PC-9 (cell line): ENCODE measurements at regions of chr2 and their contacts with region 1.

Region 1: GRCh38 chr2:231642631-231643494 is 50.2 kb downstream of the TEX44 start:
- DNase-seq: peak; percentile 95 to 98
- H3K4me3 ChIP-seq: peak overlapping the region; percentile 48; the same call in 1 of the 2 replicates
- H3K27ac ChIP-seq: peak overlapping the region; percentile 98
- H3K4me1 ChIP-seq: peaks cover 64% of the 10 kb centered on the region
- H3K27me3 ChIP-seq: no peaks in the 10 kb centered on the region
- CTCF ChIP-seq: no peak

Region 2: DNA sequence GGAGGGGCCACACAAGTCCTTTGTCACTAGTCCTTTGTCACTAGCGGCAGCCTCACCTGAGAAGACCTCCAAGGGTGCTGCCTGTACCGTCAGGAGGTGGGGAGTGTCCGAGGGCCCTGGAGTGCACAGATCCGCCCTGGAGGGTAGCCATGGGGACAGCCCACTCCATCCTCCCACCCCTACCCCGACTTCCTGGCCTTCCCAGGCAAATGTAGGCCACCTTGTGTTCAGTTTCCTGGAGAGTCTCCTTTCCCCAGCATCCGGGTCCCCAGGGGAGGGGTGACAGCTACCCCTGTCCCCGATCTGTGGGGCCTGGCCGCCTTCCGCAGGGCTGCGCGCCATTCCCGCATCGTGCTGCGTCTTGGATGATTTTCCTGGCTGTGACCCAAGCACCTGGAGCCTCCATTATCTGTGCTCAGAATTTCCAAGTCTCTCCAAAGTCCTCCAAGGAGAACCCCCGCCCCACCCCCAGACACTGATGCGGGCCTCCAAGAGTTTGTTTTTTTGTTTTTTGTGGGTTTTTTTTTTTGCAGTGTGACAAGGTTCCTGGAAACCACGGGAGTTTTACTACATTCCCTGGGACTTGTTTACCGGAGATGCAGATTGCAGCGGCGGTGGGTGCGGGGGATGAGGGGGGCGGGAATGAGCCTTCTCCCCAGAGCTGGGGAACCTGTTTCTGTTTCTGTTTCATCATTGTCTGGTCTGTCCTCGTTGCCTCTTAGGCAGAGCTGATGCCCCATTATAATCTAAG is 21.6 kb before region 1 on chr2:
- CTCF ChIA-PET with region 1: no interaction called
- POLR2A ChIA-PET with region 1: interaction called, 7 read pairs
- intact Hi-C with region 1: loop called (anchors 1 kb)
- DNase-seq: peak; percentile 83 to 94
- H3K4me3 ChIP-seq: peak overlapping the region; percentile 55
- H3K27ac ChIP-seq: peak overlapping the region; percentile 80
- H3K4me1 ChIP-seq: peaks cover 57% of the 10 kb centered on the region
- H3K27me3 ChIP-seq: no peaks in the 10 kb centered on the region
- CTCF ChIP-seq: no peak

Region 3: DNA sequence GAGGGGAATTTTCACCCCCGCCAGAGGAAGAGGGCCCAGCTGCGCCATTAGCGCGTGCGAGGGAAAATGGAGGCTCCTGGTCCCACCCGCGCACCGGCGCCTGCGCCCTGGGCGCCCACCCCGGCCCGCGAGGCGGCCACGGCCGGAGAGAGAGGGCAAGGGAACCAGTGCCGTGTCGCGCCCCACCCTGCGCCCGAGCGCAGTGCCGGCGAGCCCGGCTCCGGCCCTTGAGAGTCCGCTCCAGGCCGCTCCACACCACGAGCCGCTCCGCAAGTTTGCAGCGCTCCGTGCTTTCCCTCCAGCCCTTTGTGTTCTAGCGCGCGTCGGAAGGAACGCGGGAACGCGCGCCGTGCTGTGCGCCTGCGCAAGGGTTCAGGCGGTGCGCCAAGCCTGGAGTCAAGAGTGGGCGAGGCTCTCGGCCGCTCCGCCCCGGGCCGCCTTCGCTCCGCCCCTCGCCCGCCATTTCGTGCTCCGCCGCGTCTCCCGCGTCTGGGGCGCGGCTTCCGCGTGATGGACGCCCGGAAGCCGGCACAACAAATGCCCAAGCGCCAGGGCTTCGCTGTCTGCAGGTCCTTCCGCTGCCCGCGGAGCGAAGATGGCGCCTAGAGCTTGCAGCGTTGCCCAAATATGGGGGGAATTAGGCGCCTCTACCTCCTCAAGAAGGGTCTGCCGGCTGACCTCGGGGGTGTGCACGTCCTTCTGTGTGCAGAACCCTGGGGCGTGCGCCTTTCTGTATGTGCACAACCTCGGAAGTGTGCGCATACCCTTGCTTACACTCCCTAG is 19.4 kb after region 1 on chr2:
- CTCF ChIA-PET with region 1: interaction called, 11 read pairs
- POLR2A ChIA-PET with region 1: interaction called, 15 read pairs
- intact Hi-C with region 1: no loop called
- DNase-seq: peak; percentile 88 to 98
- H3K4me3 ChIP-seq: peak overlapping the region; percentile 56
- H3K27ac ChIP-seq: peak overlapping the region; percentile 64
- H3K4me1 ChIP-seq: peaks cover 39% of the 10 kb centered on the region
- H3K27me3 ChIP-seq: no peaks in the 10 kb centered on the region
- CTCF ChIP-seq: no peak

Region 4: GRCh38 chr2:231680992-231681853 is 38.4 kb after region 1 on chr2:
- CTCF ChIA-PET with region 1: interaction called, 8 read pairs
- POLR2A ChIA-PET with region 1: interaction called, 10 read pairs
- intact Hi-C with region 1: no loop called
- DNase-seq: peak; percentile 61 to 93
- H3K4me3 ChIP-seq: peak overlapping the region; percentile 60
- H3K27ac ChIP-seq: peak overlapping the region; percentile 92
- H3K4me1 ChIP-seq: peaks cover 24% of the 10 kb centered on the region
- H3K27me3 ChIP-seq: no peaks in the 10 kb centered on the region
- CTCF ChIP-seq: no peak

Region 5: GRCh38 chr2:232781765-232782164 is 1138.9 kb after region 1 on chr2:
- CTCF ChIA-PET with region 1: no interaction called
- POLR2A ChIA-PET with region 1: no interaction called
- intact Hi-C with region 1: no loop called
- DNase-seq: peak; percentile 20 to 94
- H3K4me3 ChIP-seq: no peak overlapping the region
- H3K27ac ChIP-seq: peak overlapping the region; percentile 57
- H3K4me1 ChIP-seq: peaks cover 11% of the 10 kb centered on the region
- H3K27me3 ChIP-seq: no peaks in the 10 kb centered on the region
- CTCF ChIP-seq: no peak